Calu3 (cell line): ENCODE measurements at regions of chr12 and their contacts with region 1.

Region 1: DNA sequence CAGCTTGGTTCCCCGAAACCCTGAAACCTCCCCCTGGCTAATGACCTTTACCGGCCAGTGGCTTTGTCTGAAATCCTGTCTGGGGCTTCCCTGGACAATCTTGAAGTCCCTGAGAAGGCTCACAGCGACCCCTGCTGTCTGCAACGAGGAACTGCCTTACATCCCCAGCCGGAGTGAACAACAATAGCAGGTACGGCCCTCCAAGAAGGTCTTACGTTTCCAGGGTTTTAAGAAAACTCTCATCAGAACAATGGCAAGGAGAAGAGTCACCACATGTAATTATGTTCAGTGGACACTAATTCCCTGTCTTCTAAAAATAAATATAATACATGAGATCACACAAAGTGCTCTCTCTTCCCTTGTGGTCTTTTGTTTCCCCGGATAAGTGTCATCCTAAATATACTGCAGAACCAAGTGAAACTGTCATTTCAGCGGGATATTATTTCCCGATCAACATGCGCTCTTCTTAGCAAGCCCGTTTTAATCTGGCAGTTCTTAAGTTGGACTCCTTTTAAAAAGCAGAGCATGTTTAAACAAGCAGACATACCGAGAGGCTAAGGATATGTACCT is 53.3 kb downstream of the RBM19 start:
- DNase-seq: peak; percentile 79
- H3K4me3 Mint-ChIP-seq: no peak overlapping the region
- H3K27ac Mint-ChIP-seq: no peak overlapping the region
- H3K4me1 Mint-ChIP-seq: no peaks in the 10 kb centered on the region
- H3K27me3 Mint-ChIP-seq: no peaks in the 10 kb centered on the region
- CTCF ChIP-seq: peak; percentile 63

Region 2: DNA sequence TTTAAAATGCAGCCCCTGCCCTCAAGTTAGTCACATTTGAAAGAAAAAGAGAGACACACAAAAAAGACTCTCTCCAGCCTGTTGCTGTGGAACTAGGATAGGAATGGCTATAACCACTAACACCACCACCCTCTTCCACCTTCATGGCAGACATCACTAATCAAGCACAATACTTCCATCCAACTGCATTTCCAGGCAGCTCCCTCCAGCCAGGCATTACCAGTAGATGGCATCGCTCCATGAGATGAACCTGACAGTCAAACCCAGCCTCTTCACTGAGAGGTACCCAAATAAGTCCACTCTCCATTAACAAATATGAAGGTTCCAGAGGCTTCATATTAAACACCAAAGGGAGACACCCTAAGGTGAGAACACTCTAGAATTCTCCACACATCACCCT is 602.4 kb before region 1 on chr12:
- CTCF ChIA-PET with region 1: no interaction called
- intact Hi-C with region 1: loop called (anchors 2 kb)
- DNase-seq: peak; percentile 25
- H3K4me3 Mint-ChIP-seq: no peak overlapping the region
- H3K27ac Mint-ChIP-seq: no peak overlapping the region
- H3K4me1 Mint-ChIP-seq: no peaks in the 10 kb centered on the region
- H3K27me3 Mint-ChIP-seq: no peaks in the 10 kb centered on the region
- CTCF ChIP-seq: peak; percentile 20

Region 3: DNA sequence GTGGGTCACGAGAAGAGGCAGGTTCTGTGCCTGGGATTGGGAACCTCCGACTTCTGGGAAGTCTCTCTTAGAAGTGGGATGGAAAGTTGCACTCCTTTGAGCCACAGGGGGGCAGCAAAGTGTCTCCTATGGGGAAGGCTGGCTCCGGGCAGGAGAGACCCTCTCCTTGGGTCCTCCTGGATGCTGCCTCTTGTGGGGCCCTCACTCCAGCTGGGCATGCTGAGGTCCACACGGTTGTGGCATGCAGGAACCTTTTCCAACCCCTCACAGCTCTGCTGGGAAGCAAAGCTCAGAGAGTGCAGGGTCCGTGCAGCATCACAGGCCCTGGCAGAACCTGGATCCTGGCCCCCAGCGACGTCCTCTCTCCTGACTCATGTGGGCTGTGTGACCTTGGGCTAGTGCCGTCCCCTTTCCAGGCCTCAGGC is 473.2 kb before region 1 on chr12:
- CTCF ChIA-PET with region 1: no interaction called
- intact Hi-C with region 1: loop called (anchors 1 kb)
- DNase-seq: peak; percentile 68
- H3K4me3 Mint-ChIP-seq: no peak overlapping the region
- H3K27ac Mint-ChIP-seq: no peak overlapping the region
- H3K4me1 Mint-ChIP-seq: no peaks in the 10 kb centered on the region
- H3K27me3 Mint-ChIP-seq: peaks cover 1% of the 10 kb centered on the region
- CTCF ChIP-seq: peak; percentile 72

Region 4: GRCh38 chr12:113462117-113462774 is 450.6 kb before region 1 on chr12:
- CTCF ChIA-PET with region 1: no interaction called
- intact Hi-C with region 1: loop called (anchors 1 kb)
- DNase-seq: peak; percentile 90
- H3K4me3 Mint-ChIP-seq: peak overlapping the region; percentile 44
- H3K27ac Mint-ChIP-seq: no peak overlapping the region
- H3K4me1 Mint-ChIP-seq: peaks cover 23% of the 10 kb centered on the region
- H3K27me3 Mint-ChIP-seq: peaks cover 98% of the 10 kb centered on the region
- CTCF ChIP-seq: peak; percentile 72

Region 5: DNA sequence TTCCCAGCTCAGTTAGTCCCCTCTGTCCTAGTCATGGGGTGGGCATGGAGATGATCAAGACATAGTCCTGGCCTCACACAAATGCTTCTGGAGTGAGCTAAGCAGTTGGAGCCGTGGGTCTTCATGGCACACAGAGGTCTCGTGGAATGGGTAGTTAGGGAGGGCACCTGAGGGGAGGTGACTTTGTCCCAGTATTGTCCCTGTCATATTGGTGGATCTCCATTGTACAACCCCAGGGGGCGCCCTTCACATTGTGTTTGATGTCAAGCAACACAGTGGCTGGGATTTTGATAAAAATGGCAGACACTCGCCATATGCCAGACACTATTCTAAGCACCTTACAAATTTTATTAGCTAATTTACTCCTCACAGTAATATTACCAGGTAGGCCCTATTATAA is 265.8 kb before region 1 on chr12:
- CTCF ChIA-PET with region 1: no interaction called
- intact Hi-C with region 1: loop called (anchors 5 kb)
- DNase-seq: peak; percentile 15
- H3K4me3 Mint-ChIP-seq: no peak overlapping the region
- H3K27ac Mint-ChIP-seq: no peak overlapping the region
- H3K4me1 Mint-ChIP-seq: no peaks in the 10 kb centered on the region
- H3K27me3 Mint-ChIP-seq: peaks cover 97% of the 10 kb centered on the region
- CTCF ChIP-seq: peak; percentile 25

Region 6: GRCh38 chr12:113712481-113712880 is 200.4 kb before region 1 on chr12:
- CTCF ChIA-PET with region 1: no interaction called
- intact Hi-C with region 1: no loop called
- DNase-seq: no peak
- H3K4me3 Mint-ChIP-seq: no peak overlapping the region
- H3K27ac Mint-ChIP-seq: no peak overlapping the region
- H3K4me1 Mint-ChIP-seq: no peaks in the 10 kb centered on the region
- H3K27me3 Mint-ChIP-seq: peaks cover 85% of the 10 kb centered on the region
- CTCF ChIP-seq: no peak

Region 7: DNA sequence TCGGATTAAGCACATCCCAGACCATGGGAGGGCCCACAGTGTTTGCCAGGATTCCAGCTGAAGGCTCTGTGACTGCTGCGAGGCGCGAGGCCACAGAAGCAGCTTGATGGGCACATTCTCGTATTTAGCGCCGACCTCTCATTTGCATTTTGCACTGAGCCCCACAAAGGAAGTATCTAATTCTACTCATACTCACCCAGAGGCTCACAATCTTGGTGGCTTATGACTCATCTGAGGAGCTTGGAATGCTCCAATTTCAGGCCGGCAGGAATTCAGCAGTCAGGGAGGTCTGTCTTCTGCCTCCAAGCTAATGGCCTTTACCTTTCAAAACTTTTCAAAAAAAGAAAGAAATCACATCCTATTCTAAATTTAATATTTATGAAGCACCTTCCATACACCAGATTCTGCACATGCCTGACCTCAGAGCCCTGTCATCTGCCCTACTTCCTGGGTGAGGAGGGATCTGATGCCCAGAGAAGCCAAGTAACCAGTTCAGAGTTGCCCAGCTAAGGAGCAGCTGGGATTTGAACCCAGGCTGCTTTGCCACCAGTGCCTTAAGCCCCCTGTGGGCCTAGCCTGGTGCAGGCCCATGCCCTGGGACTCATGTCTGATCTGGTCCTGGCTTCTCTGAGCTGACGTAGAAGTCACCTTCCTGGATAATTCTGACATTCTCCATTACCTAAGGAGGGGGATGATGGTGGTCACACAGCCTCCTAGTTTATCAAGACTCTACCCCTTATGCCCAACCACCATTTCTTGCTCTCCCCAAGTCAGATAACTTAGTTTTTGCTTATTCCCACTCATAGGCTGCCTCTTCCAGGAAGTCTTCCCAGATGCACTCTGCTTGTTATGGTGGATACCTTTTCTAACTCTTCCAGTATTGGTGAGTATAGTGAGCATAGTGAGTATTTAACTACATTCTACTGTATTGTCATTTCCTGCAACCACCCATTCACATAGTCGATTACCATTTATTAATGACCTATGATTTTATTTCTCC is 145.7 kb before region 1 on chr12:
- CTCF ChIA-PET with region 1: no interaction called
- intact Hi-C with region 1: loop called (anchors 10 kb)
- DNase-seq: peak; percentile 57
- H3K4me3 Mint-ChIP-seq: peak overlapping the region; percentile 37
- H3K27ac Mint-ChIP-seq: no peak overlapping the region
- H3K4me1 Mint-ChIP-seq: peaks cover 33% of the 10 kb centered on the region
- H3K27me3 Mint-ChIP-seq: peaks cover 43% of the 10 kb centered on the region
- CTCF ChIP-seq: no peak

Region 8: GRCh38 chr12:113949321-113950305 is 36.8 kb after region 1 on chr12:
- CTCF ChIA-PET with region 1: no interaction called
- intact Hi-C with region 1: no loop called
- DNase-seq: no peak
- H3K4me3 Mint-ChIP-seq: no peak overlapping the region
- H3K27ac Mint-ChIP-seq: no peak overlapping the region
- H3K4me1 Mint-ChIP-seq: no peaks in the 10 kb centered on the region
- H3K27me3 Mint-ChIP-seq: no peaks in the 10 kb centered on the region
- CTCF ChIP-seq: no peak